Heart left ventricle (tissue), 16 donors: ENCODE measurements at regions of chr13 and their contacts with region 1.

Region 1: GRCh38 chr13:43935878-43936277 is 56.2 kb downstream of the LACC1 start:
- DNase-seq: no peak
- ATAC-seq: no peak
- H3K4me3 ChIP-seq: no peak overlapping the region
- H3K27ac ChIP-seq: no peak overlapping the region
- H3K4me1 ChIP-seq: peaks cover 0 to 35% (median 13%) of the 10 kb centered on the region in 12 donors
- H3K27me3 ChIP-seq: peaks cover 0 to 51% (median 0%) of the 10 kb centered on the region in 9 donors
- CTCF ChIP-seq: no peak
- POLR2A ChIP-seq: no peak

Region 2: GRCh38 chr13:43986421-43986981 is 50.6 kb after region 1 on chr13:
- intact Hi-C with region 1: loop called in 1 of 10 experiments (anchors 5 kb)
- DNase-seq: peak in 1 of 5 donors; percentile 37
- ATAC-seq: peak; percentile 89 to 95 (median 92)
- H3K4me3 ChIP-seq: no peak overlapping the region
- H3K27ac ChIP-seq: peak overlapping the region; percentile 51 to 86 (median 77)
- H3K4me1 ChIP-seq: peaks cover 0 to 45% (median 15%) of the 10 kb centered on the region in 12 donors
- H3K27me3 ChIP-seq: peaks cover 0 to 2% (median 0%) of the 10 kb centered on the region in 9 donors
- CTCF ChIP-seq: peak in 3 of 12 donors; percentile 5 to 31 (median 19)
- POLR2A ChIP-seq: no peak

Region 3: DNA sequence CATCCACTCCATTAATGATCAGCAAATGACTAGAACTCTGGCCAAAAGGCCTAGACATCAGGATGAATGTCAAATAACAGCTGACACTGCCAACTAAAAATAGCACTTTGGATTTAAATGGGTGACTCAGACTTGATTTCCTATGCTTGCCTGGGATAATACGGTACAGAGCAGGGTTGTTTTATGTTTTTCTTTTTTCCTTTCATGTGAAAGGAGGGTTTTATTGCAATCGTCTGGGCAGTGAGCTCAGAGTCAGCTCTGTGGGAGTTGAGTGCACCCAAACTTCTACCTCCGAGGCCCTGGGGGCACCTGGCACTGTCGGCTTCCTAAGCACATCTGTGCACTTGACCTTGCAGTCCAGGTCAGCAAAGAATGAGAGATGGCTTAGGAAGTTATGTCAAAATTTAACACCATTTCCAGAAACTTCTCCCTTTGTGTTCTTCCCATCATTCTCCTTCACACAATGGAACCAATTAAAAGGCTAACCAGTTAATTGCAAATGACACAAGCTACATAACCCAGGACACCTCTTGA is 77.9 kb after region 1 on chr13:
- intact Hi-C with region 1: loop called in 1 of 10 experiments (anchors 5 kb)
- DNase-seq: no peak
- ATAC-seq: peak; percentile 36 to 88 (median 82)
- H3K4me3 ChIP-seq: no peak overlapping the region
- H3K27ac ChIP-seq: peak overlapping the region in 11 of 12 donors; percentile 20 to 70 (median 63)
- H3K4me1 ChIP-seq: peaks cover 0 to 53% (median 36%) of the 10 kb centered on the region in 12 donors
- H3K27me3 ChIP-seq: no peaks in the 10 kb centered on the region
- CTCF ChIP-seq: no peak
- POLR2A ChIP-seq: no peak